Activated T-helper 2 cell treated with anti-CD3 and anti-CD28 coated beads, Interferon-gamma antibody, Interleukin-2, Interleukin-4, amounts not matched to agents 10 μg/mL and 5 μg/mL and 100 μg/mL, durations not matched to agents 14 hours and 24 hours and 36 hours (primary cell): ENCODE measurements at regions of chr17 and their contacts with region 1.

Region 1: DNA sequence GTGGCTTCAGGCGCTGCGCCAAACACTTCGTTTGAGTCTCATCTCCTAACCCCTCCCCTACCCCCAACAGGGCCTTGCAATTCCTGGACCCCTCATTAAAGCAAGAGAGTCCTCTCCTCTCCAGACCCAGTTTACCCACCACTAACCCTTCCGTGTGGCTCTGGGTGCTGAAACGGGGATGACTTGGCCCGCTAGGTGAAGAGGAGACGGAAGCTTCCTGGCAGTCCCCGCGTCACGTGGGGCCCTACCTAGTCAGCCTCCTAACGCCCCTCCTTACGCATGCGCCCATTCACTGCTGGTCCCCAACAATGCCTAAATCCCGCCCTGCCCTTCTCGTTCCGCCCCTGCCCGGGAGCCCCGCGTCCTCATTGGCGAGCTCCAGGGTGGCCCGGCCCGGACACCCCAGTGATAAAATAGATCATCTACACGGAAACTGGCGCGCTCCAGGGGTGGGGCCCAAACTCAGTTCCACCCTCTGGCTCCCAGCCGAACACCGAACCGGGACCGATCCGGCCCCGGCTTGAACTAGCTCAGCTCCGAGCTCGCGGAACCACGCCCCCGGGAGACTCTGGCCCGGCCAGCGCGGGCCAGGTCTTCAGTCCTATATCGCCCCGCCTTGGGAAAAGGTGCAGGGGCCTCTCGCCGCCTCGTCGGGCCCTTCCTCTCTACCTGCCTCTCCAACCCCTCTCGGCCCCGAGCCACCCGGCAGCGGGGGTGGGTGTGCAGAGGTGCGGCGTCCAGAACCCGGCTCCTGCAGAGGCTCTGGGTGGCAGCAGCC is at the start of gene SLC16A13:
- DNase-seq: peak; percentile 99
- H3K4me3 Mint-ChIP-seq: peak within 1 kb of the TSS; percentile 90
- H3K27ac Mint-ChIP-seq: peak within 1 kb of the TSS; percentile 96
- H3K4me1 Mint-ChIP-seq: peaks cover 31% of the 10 kb centered on the region
- H3K27me3 Mint-ChIP-seq: no peaks in the 10 kb centered on the region
- total RNA-seq, gene SLC16A13: 15.8 and 17.4 TPM in 2 replicates

Region 2: GRCh38 chr17:7014261-7014994 is 21.4 kb before region 1 on chr17:
- intact Hi-C with region 1: loop called (anchors 1 kb)
- DNase-seq: peak; percentile 98
- H3K4me3 Mint-ChIP-seq: peak overlapping the region; percentile 96
- H3K27ac Mint-ChIP-seq: peak overlapping the region; percentile 99
- H3K4me1 Mint-ChIP-seq: peaks cover 58% of the 10 kb centered on the region
- H3K27me3 Mint-ChIP-seq: no peaks in the 10 kb centered on the region

Region 3: DNA sequence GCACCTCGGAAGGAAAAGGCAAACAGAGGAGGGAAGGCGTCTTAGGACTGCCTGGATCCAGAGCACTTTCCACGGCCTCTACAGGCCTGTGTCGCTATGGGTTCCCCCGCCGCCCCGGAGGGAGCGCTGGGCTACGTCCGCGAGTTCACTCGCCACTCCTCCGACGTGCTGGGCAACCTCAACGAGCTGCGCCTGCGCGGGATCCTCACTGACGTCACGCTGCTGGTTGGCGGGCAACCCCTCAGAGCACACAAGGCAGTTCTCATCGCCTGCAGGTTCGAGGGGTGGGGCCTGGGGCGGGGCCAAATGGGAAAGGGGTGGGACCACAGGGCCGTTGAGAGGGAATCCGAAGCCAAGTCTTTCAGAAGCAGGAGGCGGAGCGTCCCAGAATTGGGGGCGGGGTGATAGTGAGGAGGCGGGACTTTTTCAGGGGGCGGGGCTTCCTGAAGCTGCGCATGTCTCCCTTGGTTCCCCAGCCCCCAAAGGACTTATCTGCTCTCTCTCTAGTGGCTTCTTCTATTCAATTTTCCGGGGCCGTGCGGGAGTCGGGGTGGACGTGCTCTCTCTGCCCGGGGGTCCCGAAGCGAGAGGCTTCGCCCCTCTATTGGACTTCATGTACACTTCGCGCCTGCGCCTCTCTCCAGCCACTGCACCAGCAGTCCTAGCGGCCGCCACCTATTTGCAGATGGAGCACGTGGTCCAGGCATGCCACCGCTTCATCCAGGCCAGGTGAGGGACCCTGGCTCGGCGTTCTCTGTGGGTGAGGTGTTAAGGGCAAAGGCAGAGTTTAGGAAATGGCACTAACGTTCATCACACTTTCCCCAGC is 12.0 kb before region 1 on chr17:
- intact Hi-C with region 1: loop called (anchors 1 kb)
- DNase-seq: peak; percentile 93
- H3K4me3 Mint-ChIP-seq: peak overlapping the region; percentile 65
- H3K27ac Mint-ChIP-seq: peak overlapping the region; percentile 65
- H3K4me1 Mint-ChIP-seq: peaks cover 35% of the 10 kb centered on the region
- H3K27me3 Mint-ChIP-seq: no peaks in the 10 kb centered on the region

Region 4: GRCh38 chr17:7045909-7046724 is 10.3 kb after region 1 on chr17:
- intact Hi-C with region 1: loop called (anchors 1 kb)
- DNase-seq: no peak
- H3K4me3 Mint-ChIP-seq: peak overlapping the region; percentile 75
- H3K27ac Mint-ChIP-seq: peak overlapping the region; percentile 68
- H3K4me1 Mint-ChIP-seq: peaks cover 21% of the 10 kb centered on the region
- H3K27me3 Mint-ChIP-seq: peaks cover 12% of the 10 kb centered on the region

Region 5: GRCh38 chr17:7214300-7215135 is 178.7 kb after region 1 on chr17:
- intact Hi-C with region 1: loop called (anchors 1 kb)
- DNase-seq: peak; percentile 99
- H3K4me3 Mint-ChIP-seq: peak overlapping the region; percentile 85
- H3K27ac Mint-ChIP-seq: peak overlapping the region; percentile 93
- H3K4me1 Mint-ChIP-seq: peaks cover 48% of the 10 kb centered on the region
- H3K27me3 Mint-ChIP-seq: peaks cover 15% of the 10 kb centered on the region

Region 6: DNA sequence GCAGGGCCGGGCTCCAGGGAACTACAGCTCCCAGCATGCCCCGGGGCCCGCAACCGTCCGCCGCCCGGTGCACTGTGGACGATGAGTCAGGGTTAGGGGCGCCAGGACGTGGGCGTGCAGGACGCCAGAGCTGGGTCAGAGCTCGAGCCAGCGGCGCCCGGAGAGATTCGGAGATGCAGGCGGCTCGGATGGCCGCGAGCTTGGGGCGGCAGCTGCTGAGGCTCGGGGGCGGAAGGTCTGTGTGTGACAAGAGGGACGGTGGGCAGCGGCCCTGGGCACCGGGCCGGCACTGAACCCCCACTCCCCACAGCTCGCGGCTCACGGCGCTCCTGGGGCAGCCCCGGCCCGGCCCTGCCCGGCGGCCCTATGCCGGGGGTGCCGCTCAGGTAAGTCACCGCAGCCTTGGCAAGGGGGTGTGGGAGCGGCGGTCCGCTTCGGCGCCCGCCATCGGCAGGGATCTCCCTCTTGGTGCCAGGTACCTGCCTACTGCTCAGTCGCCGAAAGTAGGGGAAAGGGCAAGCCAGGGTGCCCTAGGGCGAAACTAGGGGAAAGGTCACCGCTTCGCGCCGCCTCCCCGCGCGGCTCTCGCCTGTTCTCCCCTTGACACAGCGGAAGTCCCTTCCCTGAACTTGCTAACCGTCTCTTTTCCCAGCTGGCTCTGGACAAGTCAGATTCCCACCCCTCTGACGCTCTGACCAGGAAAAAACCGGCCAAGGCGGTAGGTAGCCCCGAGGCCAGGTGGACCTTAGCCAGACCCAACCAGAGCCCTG is 184.2 kb after region 1 on chr17 and contains the starts of genes ACADVL and DLG4:
- intact Hi-C with region 1: loop called (anchors 1 kb)
- DNase-seq: peak; percentile 67
- H3K4me3 Mint-ChIP-seq: peak within 1 kb of the TSS; percentile 99
- H3K27ac Mint-ChIP-seq: peak within 1 kb of the TSS; percentile 98
- H3K4me1 Mint-ChIP-seq: peaks cover 48% of the 10 kb centered on the region
- H3K27me3 Mint-ChIP-seq: no peaks in the 10 kb centered on the region
- total RNA-seq, gene ACADVL: 492 and 503 TPM in 2 replicates
- total RNA-seq, gene DLG4: 10.5 and 10.6 TPM in 2 replicates